MCF 10A (cell line): ENCODE measurements at regions of chr6 and their contacts with region 1.

Region 1: GRCh38 chr6:163392533-163392932 is 22.0 kb upstream of the QKI start:
- DNase-seq: peak; percentile 73
- H3K4me3 Mint-ChIP-seq: peak overlapping the region; percentile 53
- H3K27ac Mint-ChIP-seq: peak overlapping the region; percentile 76
- H3K4me1 Mint-ChIP-seq: peaks cover 16% of the 10 kb centered on the region
- H3K27me3 Mint-ChIP-seq: no peaks in the 10 kb centered on the region
- CTCF ChIP-seq: no peak

Region 2: DNA sequence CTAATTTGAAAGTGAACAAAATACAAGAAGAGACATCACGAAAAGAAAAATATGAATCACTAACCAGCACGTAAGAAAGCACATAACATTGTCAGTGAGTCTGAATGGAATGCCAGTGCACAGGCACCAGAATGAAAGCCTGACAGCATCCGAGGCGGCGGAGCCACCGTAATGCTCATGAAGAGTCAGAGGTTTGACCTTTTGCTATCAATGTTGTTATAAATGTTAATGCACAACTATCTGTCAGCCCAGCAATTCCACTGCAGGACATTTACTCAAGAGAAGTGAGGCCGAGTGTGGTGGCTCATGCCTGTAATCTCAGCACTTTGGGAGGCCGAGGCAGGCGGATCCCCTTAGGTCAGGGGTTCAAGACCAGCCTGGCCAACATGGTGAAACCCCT is 1227.1 kb before region 1 on chr6:
- CTCF ChIA-PET with region 1: no interaction called
- POLR2A ChIA-PET with region 1: no interaction called
- intact Hi-C with region 1: no loop called
- DNase-seq: no peak
- H3K4me3 Mint-ChIP-seq: no peak overlapping the region
- H3K27ac Mint-ChIP-seq: no peak overlapping the region
- H3K4me1 Mint-ChIP-seq: no peaks in the 10 kb centered on the region
- H3K27me3 Mint-ChIP-seq: no peaks in the 10 kb centered on the region
- CTCF ChIP-seq: no peak

Region 3: GRCh38 chr6:163147994-163148393 is 244.5 kb before region 1 on chr6:
- CTCF ChIA-PET with region 1: no interaction called
- POLR2A ChIA-PET with region 1: no interaction called
- intact Hi-C with region 1: no loop called
- DNase-seq: no peak
- H3K4me3 Mint-ChIP-seq: no peak overlapping the region
- H3K27ac Mint-ChIP-seq: no peak overlapping the region
- H3K4me1 Mint-ChIP-seq: no peaks in the 10 kb centered on the region
- H3K27me3 Mint-ChIP-seq: no peaks in the 10 kb centered on the region
- CTCF ChIP-seq: no peak

Region 4: DNA sequence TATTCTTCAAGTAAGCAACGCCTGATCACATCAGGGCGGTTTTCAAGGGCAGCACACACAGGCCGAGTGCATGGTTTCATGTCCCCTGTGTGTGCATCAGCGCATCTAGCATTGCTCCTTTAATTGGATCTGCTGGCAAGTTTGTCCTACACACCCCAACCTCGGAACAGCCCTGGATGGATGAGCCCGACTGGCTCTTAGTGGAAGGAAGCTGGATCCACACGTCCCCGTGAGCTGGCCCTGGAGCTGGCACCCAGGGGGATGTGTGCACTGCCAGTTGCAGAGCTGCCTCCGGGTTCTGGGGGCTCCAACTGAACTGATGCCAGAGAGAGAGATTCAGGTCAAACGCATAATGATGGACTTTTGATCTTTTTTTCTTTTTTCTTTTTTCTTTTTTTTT is 17.2 kb before region 1 on chr6:
- CTCF ChIA-PET with region 1: no interaction called
- POLR2A ChIA-PET with region 1: no interaction called
- intact Hi-C with region 1: no loop called
- DNase-seq: no peak
- H3K4me3 Mint-ChIP-seq: no peak overlapping the region
- H3K27ac Mint-ChIP-seq: no peak overlapping the region
- H3K4me1 Mint-ChIP-seq: no peaks in the 10 kb centered on the region
- H3K27me3 Mint-ChIP-seq: no peaks in the 10 kb centered on the region
- CTCF ChIP-seq: no peak

Region 5: DNA sequence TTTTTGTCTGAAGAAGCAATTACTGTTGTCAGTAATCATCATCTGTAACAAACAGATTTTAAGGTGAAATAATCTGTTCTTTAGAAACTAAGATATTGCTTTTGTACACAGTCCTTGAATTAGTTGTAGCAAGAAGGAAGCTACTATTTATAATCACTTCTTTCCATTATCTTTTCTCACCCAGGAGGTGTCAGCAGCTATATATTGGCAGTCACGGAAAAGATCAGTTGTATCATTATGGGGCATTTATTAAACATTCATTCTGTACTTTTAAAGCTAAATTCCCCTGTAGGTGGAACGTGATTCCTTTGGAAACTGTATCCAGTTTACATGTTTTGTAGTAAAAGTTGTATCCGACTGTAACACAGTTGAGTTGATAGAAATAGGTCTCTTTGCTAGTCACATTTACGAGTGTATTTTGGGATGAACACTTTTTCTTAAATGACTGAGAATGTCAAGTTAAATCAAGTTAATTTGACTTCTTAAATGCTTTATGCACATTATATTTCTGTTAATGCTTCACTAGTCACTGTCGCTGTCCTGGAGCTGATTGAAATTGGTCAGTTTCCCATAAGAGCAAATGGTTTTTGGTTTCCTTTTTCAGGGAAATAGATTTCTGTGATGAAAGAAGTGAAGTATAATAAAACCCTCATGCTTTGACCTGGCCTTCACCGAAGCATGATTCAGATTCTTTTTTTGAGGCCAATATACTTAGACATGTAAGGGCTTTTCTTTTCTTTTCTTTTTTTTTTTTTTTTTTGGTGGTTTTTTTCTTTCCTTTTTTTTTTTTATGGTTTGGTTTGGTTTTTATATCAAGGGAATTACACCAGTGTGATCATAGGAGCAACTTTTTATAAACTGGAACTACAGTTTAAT is 27.1 kb after region 1 on chr6:
- CTCF ChIA-PET with region 1: interaction called, 8 read pairs
- POLR2A ChIA-PET with region 1: interaction called, 18 read pairs
- intact Hi-C with region 1: no loop called
- DNase-seq: peak; percentile 32
- H3K4me3 Mint-ChIP-seq: peak overlapping the region; percentile 96
- H3K27ac Mint-ChIP-seq: peak overlapping the region; percentile 93
- H3K4me1 Mint-ChIP-seq: peaks cover 24% of the 10 kb centered on the region
- H3K27me3 Mint-ChIP-seq: no peaks in the 10 kb centered on the region
- CTCF ChIP-seq: no peak

Region 6: GRCh38 chr6:163490826-163491577 is 98.5 kb after region 1 on chr6:
- CTCF ChIA-PET with region 1: no interaction called
- POLR2A ChIA-PET with region 1: no interaction called
- intact Hi-C with region 1: no loop called
- DNase-seq: peak; percentile 47
- H3K4me3 Mint-ChIP-seq: no peak overlapping the region
- H3K27ac Mint-ChIP-seq: peak overlapping the region; percentile 57
- H3K4me1 Mint-ChIP-seq: peaks cover 52% of the 10 kb centered on the region
- H3K27me3 Mint-ChIP-seq: no peaks in the 10 kb centered on the region
- CTCF ChIP-seq: no peak